Aorta (tissue), 5 donors: ENCODE measurements at regions of chr3 and their contacts with region 1.

Region 1: GRCh38 chr3:14203521-14204079 is 25.0 kb downstream of the LSM3 start:
- DNase-seq: peak in 1 of 2 donors; percentile 64
- ATAC-seq: peak; percentile 91
- H3K4me3 ChIP-seq: no peak overlapping the region
- H3K27ac ChIP-seq: no peak overlapping the region
- H3K4me1 ChIP-seq: peaks cover 2% of the 10 kb centered on the region in 2 donors
- H3K27me3 ChIP-seq: no peaks in the 10 kb centered on the region

Region 2: DNA sequence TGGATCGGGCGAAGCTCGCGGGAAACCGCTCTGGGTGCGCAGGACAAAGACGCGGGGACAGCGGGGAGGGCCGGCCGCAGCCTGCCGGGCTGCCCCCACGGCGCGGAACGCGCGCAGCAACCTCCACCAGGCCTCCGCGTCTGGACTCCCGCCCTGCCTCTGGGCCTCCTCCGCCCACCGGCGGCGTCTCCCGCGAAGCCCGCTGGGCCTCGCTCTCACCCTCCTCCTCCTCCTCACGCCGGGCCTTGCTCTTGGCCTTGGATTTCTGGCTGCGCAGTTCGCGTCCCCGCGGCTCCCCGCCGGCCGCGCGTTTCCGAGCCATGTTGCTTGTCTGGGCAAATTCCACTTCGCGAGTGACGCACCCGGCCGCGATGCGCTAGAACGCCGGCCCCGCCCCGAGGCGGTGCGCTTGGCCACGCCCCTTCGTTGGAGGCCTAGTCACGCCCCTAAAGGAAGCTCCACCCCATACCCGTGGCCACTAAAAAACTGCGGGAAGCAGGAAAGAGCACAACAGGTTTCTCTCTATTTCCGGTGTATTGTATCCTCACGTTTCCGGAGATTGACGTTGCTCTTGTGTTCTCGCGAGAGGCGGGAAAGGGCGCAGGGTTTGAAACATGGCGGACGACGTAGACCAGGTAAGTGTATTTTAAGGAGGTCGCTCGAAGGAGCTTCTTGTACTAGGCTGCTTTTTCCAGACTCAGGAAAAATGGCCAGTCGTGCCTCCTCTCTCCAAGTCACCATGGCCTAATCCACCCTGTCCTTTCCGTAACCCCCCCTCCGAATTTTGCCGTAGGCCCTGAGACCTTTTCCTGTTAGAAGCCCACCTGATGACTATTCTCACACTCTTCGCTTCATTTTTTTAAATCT is 25.1 kb before region 1 on chr3 and contains the starts of genes LSM3 and XPC:
- intact Hi-C with region 1: no loop called
- DNase-seq: peak; percentile 96 to 99
- ATAC-seq: peak; percentile 100
- H3K4me3 ChIP-seq: peak within 1 kb of the TSS; percentile 65 to 85
- H3K27ac ChIP-seq: peak within 1 kb of the TSS; percentile 68 to 97
- H3K4me1 ChIP-seq: peaks cover 0 to 9% of the 10 kb centered on the region in 2 donors
- H3K27me3 ChIP-seq: no peaks in the 10 kb centered on the region
- total RNA-seq, gene LSM3: 7.1 to 9.0 TPM
- total RNA-seq, gene XPC: 29.7 to 36.7 TPM

Region 3: DNA sequence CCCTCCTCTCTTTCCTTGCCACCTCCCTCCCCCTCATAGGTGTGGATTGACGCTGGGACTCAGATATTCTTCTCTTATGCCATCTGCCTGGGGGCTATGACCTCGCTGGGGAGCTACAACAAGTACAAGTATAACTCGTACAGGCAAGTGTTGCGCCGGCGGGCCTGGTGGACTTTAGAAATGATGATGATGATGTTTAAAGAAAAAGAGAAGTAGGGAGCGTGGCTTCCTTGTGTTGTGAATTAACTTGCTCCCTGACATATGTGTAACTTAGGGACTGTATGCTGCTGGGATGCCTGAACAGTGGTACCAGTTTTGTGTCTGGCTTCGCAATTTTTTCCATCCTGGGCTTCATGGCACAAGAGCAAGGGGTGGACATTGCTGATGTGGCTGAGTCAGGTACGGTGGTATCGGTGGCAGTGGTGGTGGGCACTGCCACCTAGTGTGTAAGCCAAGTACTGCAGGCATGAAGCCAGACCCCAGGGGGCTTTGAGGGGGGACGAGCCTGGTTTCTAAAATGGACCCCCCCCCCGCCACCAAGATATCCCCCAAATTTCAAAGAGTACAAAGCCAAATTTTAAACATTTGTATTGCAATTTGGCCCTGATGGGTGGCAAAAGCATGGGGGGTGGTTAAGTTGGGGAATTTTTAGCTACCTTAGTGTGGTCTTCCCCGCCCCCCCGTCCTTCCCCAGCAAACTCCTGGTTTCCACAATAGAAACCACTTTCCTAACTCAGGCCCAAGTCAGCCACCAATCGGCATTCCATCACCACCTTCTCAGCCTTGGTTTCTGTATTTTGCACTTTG is 264.4 kb after region 1 on chr3:
- intact Hi-C with region 1: loop called (anchors 5 kb)
- DNase-seq: no peak
- ATAC-seq: peak; percentile 78
- H3K4me3 ChIP-seq: no peak overlapping the region
- H3K27ac ChIP-seq: no peak overlapping the region
- H3K4me1 ChIP-seq: no peaks in the 10 kb centered on the region
- H3K27me3 ChIP-seq: no peaks in the 10 kb centered on the region

Region 4: DNA sequence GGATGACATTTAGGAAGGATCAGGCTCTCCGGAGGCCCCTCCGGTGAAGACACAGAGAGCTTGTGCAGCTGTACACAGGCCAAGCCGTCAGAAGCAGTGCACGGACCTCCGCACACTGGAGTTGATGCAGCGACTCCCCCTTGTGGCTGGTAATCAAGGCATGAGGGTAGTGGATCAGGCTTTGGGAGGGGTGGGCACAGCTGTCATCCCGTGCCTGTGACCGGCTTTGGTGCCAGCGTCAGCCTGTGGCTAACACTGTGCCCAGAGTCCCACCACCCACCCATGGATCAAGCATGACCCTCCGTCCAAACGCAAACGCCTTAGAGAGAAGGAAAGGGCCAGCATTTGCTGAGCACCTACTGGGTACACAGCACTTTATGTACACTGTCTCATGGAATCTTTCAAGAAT is 344.7 kb after region 1 on chr3:
- intact Hi-C with region 1: loop called in 1 of 2 experiments (anchors 5 kb)
- DNase-seq: peak; percentile 75 to 83
- ATAC-seq: peak; percentile 81
- H3K4me3 ChIP-seq: no peak overlapping the region
- H3K27ac ChIP-seq: no peak overlapping the region
- H3K4me1 ChIP-seq: no peaks in the 10 kb centered on the region
- H3K27me3 ChIP-seq: peaks cover 0 to 2% of the 10 kb centered on the region in 2 donors

Region 5: DNA sequence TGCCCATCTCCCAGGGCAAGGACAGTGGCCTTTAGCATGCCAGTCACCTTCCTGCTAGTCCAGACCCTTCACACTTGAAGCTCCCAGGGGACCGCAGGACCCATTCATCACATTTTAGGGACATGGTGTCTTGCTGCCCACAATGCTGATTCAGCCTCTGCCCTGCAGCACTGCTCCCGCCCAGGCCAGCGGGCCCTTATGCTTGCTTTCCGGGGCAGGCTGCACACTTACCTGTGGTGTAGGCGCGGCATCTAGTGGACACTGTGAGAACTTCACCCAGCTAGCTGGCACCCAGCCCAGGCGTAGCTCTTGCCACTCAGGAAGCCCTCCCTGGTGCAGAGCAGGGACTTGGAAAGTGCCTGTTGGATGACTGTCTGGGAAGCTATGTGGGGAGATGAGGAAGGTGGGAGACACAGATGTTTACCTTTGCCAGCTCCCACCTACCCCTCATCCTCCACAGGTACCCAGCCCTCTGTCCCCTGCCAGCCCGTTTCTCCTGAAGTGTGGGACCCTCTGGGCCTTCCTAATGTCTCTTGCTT is 717.5 kb after region 1 on chr3:
- intact Hi-C with region 1: no loop called
- DNase-seq: peak; percentile 87 to 94
- ATAC-seq: peak; percentile 94
- H3K4me3 ChIP-seq: no peak overlapping the region
- H3K27ac ChIP-seq: no peak overlapping the region
- H3K4me1 ChIP-seq: no peaks in the 10 kb centered on the region
- H3K27me3 ChIP-seq: no peaks in the 10 kb centered on the region